GM12878 (cell line): ENCODE measurements at regions of chr18 and their contacts with region 1.

Region 1: DNA sequence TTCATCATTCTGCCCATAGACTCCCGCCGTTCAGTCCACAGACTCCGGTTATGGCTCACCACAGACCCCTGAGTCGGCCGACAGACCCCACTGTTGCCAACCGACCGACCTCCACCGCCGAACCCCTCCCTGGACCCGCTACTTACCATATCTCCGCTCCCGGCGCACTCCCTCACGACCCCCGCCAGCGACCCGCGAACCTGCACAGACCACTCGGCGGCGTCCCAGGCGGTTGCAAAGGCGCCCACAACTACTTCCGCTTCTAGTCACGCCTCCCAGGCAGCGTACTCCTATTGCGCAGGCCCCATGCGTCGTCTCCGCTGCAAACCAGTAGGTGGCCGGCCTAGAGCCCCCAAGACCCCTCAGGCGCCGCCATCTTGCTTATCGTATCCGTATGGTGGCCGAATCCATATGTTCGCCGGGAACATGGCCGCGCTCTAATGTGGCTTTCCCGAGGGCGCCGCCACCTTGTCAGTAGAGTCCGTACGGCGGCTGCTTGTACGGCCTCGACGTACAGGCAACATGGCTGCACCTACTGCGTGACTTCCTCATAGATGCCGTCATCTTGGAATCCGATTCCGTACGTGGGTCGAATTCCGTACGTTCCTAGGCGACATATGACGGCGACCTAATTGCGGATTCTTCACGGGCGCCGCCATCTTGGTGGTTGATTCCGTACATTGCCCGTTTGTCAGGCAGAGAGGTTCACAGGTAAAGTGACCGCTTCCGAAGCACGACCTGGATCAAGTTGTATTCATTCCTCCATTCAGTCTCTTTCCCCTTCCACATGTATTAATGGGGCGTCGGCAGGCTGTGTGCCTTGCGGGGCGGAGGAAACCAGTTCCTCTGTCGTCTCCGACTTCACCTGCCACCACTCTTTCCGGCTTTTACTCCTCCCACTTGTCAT is at the start of gene CXXC1:
- DNase-seq: peak; percentile 99
- ATAC-seq: peak; percentile 97
- H3K4me3 ChIP-seq: peak within 1 kb of the TSS; percentile 97
- H3K27ac ChIP-seq: peak within 1 kb of the TSS; percentile 73
- H3K4me1 ChIP-seq: peaks cover 9% of the 10 kb centered on the region
- H3K27me3 ChIP-seq: no peaks in the 10 kb centered on the region
- CTCF ChIP-seq: peak; percentile 50 to 64 (median 51)
- EP300 ChIP-seq: no peak
- POLR2A ChIP-seq: no peak
- RAD21 ChIP-seq: peak; percentile 44; the same call in 1 of the 2 replicates
- polyA plus RNA-seq, gene CXXC1: 9.2 to 17.0 TPM

Region 2: DNA sequence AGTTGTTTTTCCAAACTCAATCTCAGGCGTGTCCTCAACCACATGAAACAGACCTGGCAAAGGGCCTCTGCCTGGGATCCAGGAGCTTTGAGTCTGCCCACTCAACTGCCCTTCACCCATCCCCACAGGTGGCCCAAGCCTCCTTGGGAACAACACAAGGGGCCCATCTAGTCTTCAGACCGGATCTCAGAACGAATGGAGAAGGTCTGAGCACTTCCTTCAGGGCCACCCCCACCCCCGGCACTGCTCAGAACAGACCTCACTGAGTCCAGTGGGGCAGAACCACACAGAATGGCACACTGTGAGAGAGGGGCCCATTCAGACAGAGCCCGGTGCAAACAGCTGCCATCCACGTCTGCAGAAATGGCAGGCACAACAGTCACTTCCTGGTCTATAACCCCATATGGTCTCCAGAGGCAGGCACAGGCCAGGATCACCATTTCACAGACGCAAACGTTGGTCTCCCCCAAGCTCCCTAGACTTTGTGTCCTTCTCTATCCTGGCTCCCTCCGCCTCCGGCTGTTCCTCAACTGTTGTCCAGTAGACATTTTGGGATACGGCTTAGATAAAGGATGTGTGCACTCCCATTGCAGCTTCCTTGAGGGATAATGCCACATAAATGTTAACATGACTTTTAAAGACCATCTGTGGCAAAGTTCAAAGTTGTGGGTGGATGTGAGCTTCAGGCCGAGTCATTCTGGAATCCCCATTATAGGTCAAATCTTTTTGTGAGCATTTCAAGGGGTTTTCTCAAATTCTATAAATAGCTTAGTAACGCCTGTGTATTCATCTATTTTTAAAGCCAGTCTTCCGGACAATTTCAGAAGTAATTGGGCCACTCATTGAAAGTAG is 1486.6 kb before region 1 on chr18:
- CTCF ChIA-PET with region 1: no interaction called
- POLR2A ChIA-PET with region 1: no interaction called
- RAD21 ChIA-PET with region 1: no interaction called
- SMC1A ChIA-PET with region 1: no interaction called
- in situ Hi-C with region 1: loop called (anchors 25 kb)
- intact Hi-C with region 1: no loop called
- DNase-seq: peak; percentile 89
- ATAC-seq: peak; percentile 87
- H3K4me3 ChIP-seq: peak overlapping the region; percentile 36; the same call in 1 of the 2 replicates
- H3K27ac ChIP-seq: peak overlapping the region; percentile 92
- H3K4me1 ChIP-seq: peaks cover 52% of the 10 kb centered on the region
- H3K27me3 ChIP-seq: no peaks in the 10 kb centered on the region
- CTCF ChIP-seq: no peak
- EP300 ChIP-seq: peak; percentile 87 to 93
- POLR2A ChIP-seq: peak; percentile 60; the same call in 1 of the 2 replicates
- RAD21 ChIP-seq: no peak

Region 3: GRCh38 chr18:48928787-48929186 is 1358.9 kb before region 1 on chr18:
- CTCF ChIA-PET with region 1: no interaction called
- POLR2A ChIA-PET with region 1: no interaction called
- RAD21 ChIA-PET with region 1: no interaction called
- SMC1A ChIA-PET with region 1: no interaction called
- in situ Hi-C with region 1: loop called (anchors 25 kb)
- intact Hi-C with region 1: no loop called
- DNase-seq: peak; percentile 72
- ATAC-seq: peak; percentile 86
- H3K4me3 ChIP-seq: peak overlapping the region; percentile 11; the same call in 1 of the 2 replicates
- H3K27ac ChIP-seq: peak overlapping the region; percentile 49
- H3K4me1 ChIP-seq: peaks cover 72% of the 10 kb centered on the region
- H3K27me3 ChIP-seq: no peaks in the 10 kb centered on the region
- CTCF ChIP-seq: no peak
- EP300 ChIP-seq: no peak
- POLR2A ChIP-seq: peak; percentile 70
- RAD21 ChIP-seq: no peak

Region 4: DNA sequence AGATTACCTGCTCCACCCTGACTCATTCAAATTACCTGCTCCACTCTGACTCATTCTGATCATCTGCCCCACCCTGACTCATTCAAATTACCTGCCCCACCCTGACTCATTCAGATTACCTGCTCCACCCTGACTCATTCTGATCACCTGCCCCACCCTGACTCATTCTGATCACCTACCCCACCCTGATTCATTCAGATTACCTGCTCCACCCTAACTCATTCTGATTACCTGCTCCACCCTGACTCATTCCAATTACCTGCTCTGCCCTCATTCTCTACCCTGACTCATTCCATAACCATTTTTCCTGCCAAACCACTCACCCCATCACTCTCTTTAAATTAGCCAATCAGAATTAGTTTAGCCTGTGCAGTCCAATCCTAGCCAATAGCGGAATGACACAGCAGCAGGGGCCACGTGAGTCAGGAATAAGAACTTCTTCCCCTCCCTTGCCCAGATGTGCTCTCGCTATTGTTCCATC is 47.6 kb before region 1 on chr18:
- CTCF ChIA-PET with region 1: no interaction called
- POLR2A ChIA-PET with region 1: no interaction called
- RAD21 ChIA-PET with region 1: no interaction called
- SMC1A ChIA-PET with region 1: no interaction called
- in situ Hi-C with region 1: no loop called
- intact Hi-C with region 1: no loop called
- DNase-seq: no peak
- ATAC-seq: no peak
- H3K4me3 ChIP-seq: no peak overlapping the region
- H3K27ac ChIP-seq: no peak overlapping the region
- H3K4me1 ChIP-seq: no peaks in the 10 kb centered on the region
- H3K27me3 ChIP-seq: no peaks in the 10 kb centered on the region
- CTCF ChIP-seq: no peak
- EP300 ChIP-seq: no peak
- POLR2A ChIP-seq: no peak
- RAD21 ChIP-seq: no peak

Region 5: GRCh38 chr18:50307738-50308470 is 20.2 kb after region 1 on chr18:
- CTCF ChIA-PET with region 1: interaction called, 10 read pairs
- POLR2A ChIA-PET with region 1: interaction called, 5 read pairs
- RAD21 ChIA-PET with region 1: interaction called, 23 read pairs
- SMC1A ChIA-PET with region 1: interaction called, 10 read pairs
- in situ Hi-C with region 1: no loop called
- intact Hi-C with region 1: no loop called
- DNase-seq: peak; percentile 73
- ATAC-seq: peak; percentile 88
- H3K4me3 ChIP-seq: peak overlapping the region; percentile 52; the same call in 1 of the 2 replicates
- H3K27ac ChIP-seq: peak overlapping the region; percentile 66
- H3K4me1 ChIP-seq: peaks cover 34% of the 10 kb centered on the region
- H3K27me3 ChIP-seq: no peaks in the 10 kb centered on the region
- CTCF ChIP-seq: no peak
- EP300 ChIP-seq: no peak
- POLR2A ChIP-seq: no peak; the same call in none of the 2 replicates
- RAD21 ChIP-seq: no peak

Region 6: GRCh38 chr18:50315100-50315871 is 27.6 kb after region 1 on chr18:
- CTCF ChIA-PET with region 1: interaction called, 10 read pairs
- POLR2A ChIA-PET with region 1: interaction called, 5 read pairs
- RAD21 ChIA-PET with region 1: interaction called, 23 read pairs
- SMC1A ChIA-PET with region 1: interaction called, 25 read pairs
- in situ Hi-C with region 1: no loop called
- intact Hi-C with region 1: loop called (anchors 2 kb)
- DNase-seq: peak; percentile 97
- ATAC-seq: peak; percentile 89
- H3K4me3 ChIP-seq: peak overlapping the region; percentile 22
- H3K27ac ChIP-seq: peak overlapping the region; percentile 95
- H3K4me1 ChIP-seq: peaks cover 72% of the 10 kb centered on the region
- H3K27me3 ChIP-seq: no peaks in the 10 kb centered on the region
- CTCF ChIP-seq: no peak
- EP300 ChIP-seq: peak in 1 of 2 experiments; percentile 73; a peak in 2 of 4 replicates
- POLR2A ChIP-seq: no peak
- RAD21 ChIP-seq: 0 out of 2 replicates have a peak, but pooled peaks have one; percentile 20